ENCODE measurements at regions of chr5 and their contacts with region 1.

Region 1: DNA sequence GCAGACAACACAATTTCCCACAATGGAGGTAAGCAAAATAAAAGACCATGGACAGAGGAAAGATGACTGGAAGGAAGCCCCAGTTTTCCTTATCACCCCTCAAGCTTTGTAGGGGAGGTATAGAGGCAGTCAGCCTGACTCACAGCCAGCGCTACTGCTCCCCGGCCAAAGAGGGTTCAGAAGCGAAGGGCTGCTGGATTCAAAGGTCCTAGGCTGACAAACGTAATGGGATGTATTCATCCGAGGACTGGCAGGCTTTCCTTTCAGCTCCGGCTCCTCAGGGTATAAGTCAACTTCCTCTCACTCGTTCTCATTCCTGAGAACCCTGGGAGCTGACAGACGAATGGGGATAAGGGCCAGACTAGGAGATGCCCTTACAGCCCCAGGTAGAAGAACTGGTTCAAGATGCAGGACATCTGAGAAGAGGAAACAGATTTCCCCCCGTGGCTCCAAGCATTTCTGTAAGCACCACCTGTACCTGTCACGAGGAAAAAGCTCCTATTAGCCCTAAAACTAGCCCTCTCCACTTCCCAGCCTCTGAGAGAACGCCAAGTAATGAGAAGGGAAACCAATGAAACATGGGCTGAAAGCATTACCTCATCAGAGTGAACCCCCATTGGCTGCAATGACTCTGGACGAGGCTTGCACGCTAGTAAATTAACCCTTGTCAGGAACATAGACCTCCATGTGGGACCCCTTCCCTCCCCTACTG is 22.1 kb upstream of the FAM13B start:
- DNase-seq: no peak
- H3K4me3 ChIP-seq: no peak overlapping the region
- H3K27ac ChIP-seq: no peak overlapping the region
- H3K4me1 ChIP-seq: no peaks in the 10 kb centered on the region
- H3K27me3 ChIP-seq: peaks cover 6 to 16% of the 10 kb centered on the region in 2 experiments
- CTCF ChIP-seq: no peak
- POLR2A ChIP-seq: no peak

Region 2: GRCh38 chr5:137995077-137995748 is 59.8 kb before region 1 on chr5:
- CTCF ChIA-PET with region 1: no interaction called
- POLR2A ChIA-PET with region 1: no interaction called
- dilution Hi-C with region 1: no loop called
- intact Hi-C with region 1: no loop called
- DNase-seq: peak; percentile 74
- H3K4me3 ChIP-seq: no peak overlapping the region
- H3K27ac ChIP-seq: peak overlapping the region; percentile 29
- H3K4me1 ChIP-seq: peaks cover 16% of the 10 kb centered on the region
- H3K27me3 ChIP-seq: no peaks in the 10 kb centered on the region
- CTCF ChIP-seq: no peak
- POLR2A ChIP-seq: no peak

Region 3: GRCh38 chr5:138024117-138024516 is 30.9 kb before region 1 on chr5:
- CTCF ChIA-PET with region 1: no interaction called
- POLR2A ChIA-PET with region 1: no interaction called
- dilution Hi-C with region 1: no loop called
- intact Hi-C with region 1: no loop called
- DNase-seq: no peak
- H3K4me3 ChIP-seq: no peak overlapping the region
- H3K27ac ChIP-seq: no peak overlapping the region
- H3K4me1 ChIP-seq: no peaks in the 10 kb centered on the region
- H3K27me3 ChIP-seq: no peaks in the 10 kb centered on the region
- CTCF ChIP-seq: no peak
- POLR2A ChIP-seq: no peak

Region 4: DNA sequence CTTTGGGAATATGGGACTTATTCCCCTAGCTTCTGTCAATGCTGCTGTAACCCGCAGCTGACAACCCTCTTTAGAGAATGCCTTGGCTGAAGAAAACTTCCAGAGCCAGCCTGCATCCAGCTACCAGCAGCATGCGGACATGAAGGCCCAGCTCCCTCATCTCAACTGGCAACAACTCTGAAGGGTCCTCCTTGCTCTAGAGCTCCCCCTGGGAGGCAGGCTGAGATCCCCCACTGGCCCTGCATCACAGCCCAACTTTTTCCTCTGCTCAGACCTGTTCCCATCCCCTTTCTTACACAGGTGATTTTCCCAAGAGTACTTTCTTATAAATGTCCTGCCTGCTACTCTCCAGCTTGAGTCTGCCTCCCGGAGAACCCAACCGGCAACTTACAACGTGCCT is 10.1 kb after region 1 on chr5:
- CTCF ChIA-PET with region 1: interaction called, 37 read pairs
- POLR2A ChIA-PET with region 1: no interaction called
- dilution Hi-C with region 1: no loop called
- intact Hi-C with region 1: no loop called
- DNase-seq: no peak
- H3K4me3 ChIP-seq: no peak overlapping the region
- H3K27ac ChIP-seq: no peak overlapping the region
- H3K4me1 ChIP-seq: no peaks in the 10 kb centered on the region
- H3K27me3 ChIP-seq: no peaks in the 10 kb centered on the region
- CTCF ChIP-seq: peak; percentile 16 to 44
- POLR2A ChIP-seq: no peak